Activated naive CD8-positive, alpha-beta T cell treated with anti-CD3 and anti-CD28 coated beads, Interleukin-2, amount 10 ng/mL, durations not matched to agents 7 days and 5 days (primary cell): ENCODE measurements at regions of chr17 and their contacts with region 1.

Region 1: GRCh38 chr17:56913864-56914640 is at the start of gene TRIM25:
- DNase-seq: peak; percentile 86
- ATAC-seq: peak; percentile 89
- H3K4me3 Mint-ChIP-seq: peak within 1 kb of the TSS; percentile 88
- H3K27ac Mint-ChIP-seq: peak within 1 kb of the TSS; percentile 96
- H3K4me1 Mint-ChIP-seq: peaks cover 34% of the 10 kb centered on the region
- H3K27me3 Mint-ChIP-seq: no peaks in the 10 kb centered on the region
- total RNA-seq, gene TRIM25: 139 to 141 TPM

Region 2: DNA sequence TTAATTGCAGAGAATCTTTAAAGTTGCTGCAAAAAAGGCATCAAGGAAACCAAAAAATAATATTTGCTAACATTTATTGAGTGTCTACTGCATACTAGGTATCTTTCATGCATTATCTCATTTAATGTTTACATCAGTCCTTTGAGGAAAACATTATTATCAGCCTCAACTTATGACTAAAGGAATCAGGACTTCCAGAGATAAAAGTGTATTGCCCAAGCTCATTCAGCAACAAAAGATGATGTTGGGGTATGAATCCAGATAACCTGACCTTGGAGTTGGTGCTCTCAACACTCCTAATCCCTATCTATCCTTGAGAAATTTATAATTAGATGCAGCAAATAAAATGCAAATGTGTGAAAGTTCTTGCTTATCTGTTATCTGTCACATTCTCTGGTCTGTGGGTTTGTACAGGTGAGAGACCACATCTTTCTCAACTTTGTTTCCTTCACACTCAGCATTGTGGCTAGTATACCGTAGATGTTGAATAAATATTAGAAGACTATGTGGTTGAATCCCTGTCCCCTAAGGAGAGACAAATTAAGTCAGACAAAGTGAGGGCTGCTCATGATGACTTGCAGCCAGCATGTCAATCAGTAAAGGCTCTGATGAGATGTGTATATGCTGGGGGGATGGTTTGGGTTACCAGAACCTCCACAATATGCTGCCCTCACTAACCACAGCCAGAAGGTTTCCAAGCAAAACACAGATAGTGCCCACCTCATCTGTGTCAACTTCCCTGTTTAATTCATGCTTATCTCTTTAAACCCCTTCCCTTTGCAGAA is 238.0 kb before region 1 on chr17:
- POLR2A ChIA-PET with region 1: no interaction called
- DNase-seq: no peak
- ATAC-seq: no peak
- H3K4me3 Mint-ChIP-seq: no peak overlapping the region
- H3K27ac Mint-ChIP-seq: no peak overlapping the region
- H3K4me1 Mint-ChIP-seq: peaks cover 24% of the 10 kb centered on the region
- H3K27me3 Mint-ChIP-seq: peaks cover 36% of the 10 kb centered on the region

Region 3: GRCh38 chr17:56893216-56893863 is 20.7 kb before region 1 on chr17:
- POLR2A ChIA-PET with region 1: interaction called, 10 read pairs
- DNase-seq: no peak
- ATAC-seq: no peak
- H3K4me3 Mint-ChIP-seq: no peak overlapping the region
- H3K27ac Mint-ChIP-seq: no peak overlapping the region
- H3K4me1 Mint-ChIP-seq: peaks cover 18% of the 10 kb centered on the region
- H3K27me3 Mint-ChIP-seq: no peaks in the 10 kb centered on the region

Region 4: GRCh38 chr17:56903560-56903959 is 10.5 kb before region 1 on chr17:
- POLR2A ChIA-PET with region 1: interaction called, 18 read pairs
- DNase-seq: no peak
- ATAC-seq: no peak
- H3K4me3 Mint-ChIP-seq: no peak overlapping the region
- H3K27ac Mint-ChIP-seq: no peak overlapping the region
- H3K4me1 Mint-ChIP-seq: peaks cover 41% of the 10 kb centered on the region
- H3K27me3 Mint-ChIP-seq: no peaks in the 10 kb centered on the region

Region 5: GRCh38 chr17:56939901-56940343 is 25.9 kb after region 1 on chr17:
- POLR2A ChIA-PET with region 1: interaction called, 10 read pairs
- DNase-seq: no peak
- ATAC-seq: peak; percentile 54
- H3K4me3 Mint-ChIP-seq: no peak overlapping the region
- H3K27ac Mint-ChIP-seq: no peak overlapping the region
- H3K4me1 Mint-ChIP-seq: peaks cover 14% of the 10 kb centered on the region
- H3K27me3 Mint-ChIP-seq: no peaks in the 10 kb centered on the region

Region 6: GRCh38 chr17:56960596-56961538 is 46.8 kb after region 1 on chr17 and contains the start of gene COIL:
- POLR2A ChIA-PET with region 1: interaction called, 11 read pairs
- DNase-seq: peak; percentile 93
- ATAC-seq: peak; percentile 98
- H3K4me3 Mint-ChIP-seq: peak within 1 kb of the TSS; percentile 80
- H3K27ac Mint-ChIP-seq: peak within 1 kb of the TSS; percentile 82
- H3K4me1 Mint-ChIP-seq: peaks cover 14% of the 10 kb centered on the region
- H3K27me3 Mint-ChIP-seq: no peaks in the 10 kb centered on the region
- total RNA-seq, gene COIL: 16.4 TPM

Region 7: DNA sequence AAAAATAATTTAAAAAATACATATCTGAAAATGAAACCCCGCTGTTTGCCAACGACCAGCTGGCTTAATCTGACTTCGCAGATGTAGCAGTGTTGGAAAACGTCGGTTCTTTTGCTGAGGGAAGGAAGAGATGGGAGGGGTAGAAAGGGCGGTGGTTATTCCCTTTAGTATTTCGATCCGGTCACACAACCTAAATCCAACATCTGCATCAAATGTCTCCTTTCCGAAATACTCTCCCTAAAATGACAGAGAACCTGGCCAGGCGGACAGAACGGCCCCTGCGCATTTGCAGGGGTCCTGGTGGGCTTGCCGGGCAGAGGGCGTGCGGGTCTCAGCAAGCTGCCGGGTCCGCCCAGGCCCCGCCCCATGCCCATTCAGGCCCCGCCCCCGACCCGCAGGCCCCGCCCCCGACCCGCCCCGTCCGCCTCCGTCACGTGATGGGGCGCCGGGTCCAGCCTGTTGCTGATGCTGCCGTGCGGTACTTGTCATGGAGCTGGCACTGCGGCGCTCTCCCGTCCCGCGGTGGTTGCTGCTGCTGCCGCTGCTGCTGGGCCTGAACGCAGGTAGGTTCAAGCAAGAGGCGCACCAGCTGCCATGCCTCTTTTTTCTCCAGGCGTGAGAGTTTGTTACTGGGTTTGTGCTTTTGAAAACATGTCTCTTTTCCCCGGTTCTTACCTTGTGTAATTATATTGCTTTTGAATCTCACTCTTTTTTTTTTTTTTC is 63.8 kb after region 1 on chr17 and contains the start of gene SCPEP1:
- POLR2A ChIA-PET with region 1: interaction called, 10 read pairs
- DNase-seq: peak; percentile 81
- ATAC-seq: peak; percentile 94
- H3K4me3 Mint-ChIP-seq: peak within 1 kb of the TSS; percentile 83
- H3K27ac Mint-ChIP-seq: peak within 1 kb of the TSS; percentile 82
- H3K4me1 Mint-ChIP-seq: peaks cover 19% of the 10 kb centered on the region
- H3K27me3 Mint-ChIP-seq: peaks cover 26% of the 10 kb centered on the region
- total RNA-seq, gene SCPEP1: 15.8 to 16.6 TPM

Region 8: DNA sequence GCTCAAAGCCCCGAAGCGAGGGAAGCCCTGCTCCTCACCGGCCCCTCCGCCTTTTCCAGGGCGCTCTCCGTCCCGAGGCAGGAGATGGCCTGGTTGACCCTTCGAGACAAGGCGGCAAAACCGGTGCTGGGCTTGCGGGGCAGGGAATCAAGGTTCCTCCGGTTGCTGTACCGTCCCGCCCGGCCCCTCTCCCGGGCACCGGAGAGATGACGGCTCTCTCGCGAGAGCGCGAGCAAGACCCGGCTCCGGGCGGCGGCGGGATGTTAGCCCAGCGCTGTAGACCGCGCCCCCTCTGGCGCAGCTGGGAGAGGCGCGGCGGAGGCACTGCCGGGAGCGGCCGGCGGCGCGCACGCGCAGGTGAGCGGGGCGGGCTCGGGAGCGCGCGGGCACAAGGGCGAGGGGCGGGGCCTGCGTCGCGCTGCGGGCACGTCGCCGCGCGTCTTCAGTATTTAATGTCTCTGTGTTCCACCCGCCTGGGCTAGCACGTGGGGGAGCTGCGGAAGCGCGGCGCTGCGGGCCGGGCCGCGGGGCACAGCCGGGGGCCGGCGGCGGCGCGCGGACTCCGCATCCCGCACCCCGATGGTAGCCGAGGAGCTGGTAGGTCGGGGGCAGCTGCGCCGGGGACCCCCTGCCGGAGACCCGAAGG is 170.9 kb after region 1 on chr17 and contains the start of gene AKAP1:
- POLR2A ChIA-PET with region 1: interaction called, 16 read pairs
- DNase-seq: peak; percentile 99
- ATAC-seq: peak; percentile 92
- H3K4me3 Mint-ChIP-seq: peak within 1 kb of the TSS; percentile 90
- H3K27ac Mint-ChIP-seq: peak within 1 kb of the TSS; percentile 91
- H3K4me1 Mint-ChIP-seq: peaks cover 24% of the 10 kb centered on the region
- H3K27me3 Mint-ChIP-seq: no peaks in the 10 kb centered on the region
- total RNA-seq, gene AKAP1: 21.4 to 23.8 TPM